ENCODE measurements at regions of chr1 and their contacts with region 1.

Region 1: GRCh38 chr1:150925816-150926741 is at the start of gene SETDB1:
- DNase-seq: peak; percentile 97
- H3K4me3 Mint-ChIP-seq: peak within 1 kb of the TSS; percentile 96
- H3K27ac Mint-ChIP-seq: peak within 1 kb of the TSS; percentile 96
- H3K4me1 Mint-ChIP-seq: peaks cover 25% of the 10 kb centered on the region
- H3K27me3 Mint-ChIP-seq: no peaks in the 10 kb centered on the region
- total RNA-seq, gene SETDB1: 40.4 to 44.7 TPM

Region 2: GRCh38 chr1:150567717-150568593 is 358.1 kb before region 1 on chr1:
- CTCF ChIA-PET with region 1: interaction called, 3 read pairs
- intact Hi-C with region 1: loop called (anchors 1 kb)
- DNase-seq: peak; percentile 67
- H3K4me3 Mint-ChIP-seq: peak overlapping the region; percentile 71
- H3K27ac Mint-ChIP-seq: peak overlapping the region; percentile 99
- H3K4me1 Mint-ChIP-seq: peaks cover 94% of the 10 kb centered on the region
- H3K27me3 Mint-ChIP-seq: no peaks in the 10 kb centered on the region

Region 3: DNA sequence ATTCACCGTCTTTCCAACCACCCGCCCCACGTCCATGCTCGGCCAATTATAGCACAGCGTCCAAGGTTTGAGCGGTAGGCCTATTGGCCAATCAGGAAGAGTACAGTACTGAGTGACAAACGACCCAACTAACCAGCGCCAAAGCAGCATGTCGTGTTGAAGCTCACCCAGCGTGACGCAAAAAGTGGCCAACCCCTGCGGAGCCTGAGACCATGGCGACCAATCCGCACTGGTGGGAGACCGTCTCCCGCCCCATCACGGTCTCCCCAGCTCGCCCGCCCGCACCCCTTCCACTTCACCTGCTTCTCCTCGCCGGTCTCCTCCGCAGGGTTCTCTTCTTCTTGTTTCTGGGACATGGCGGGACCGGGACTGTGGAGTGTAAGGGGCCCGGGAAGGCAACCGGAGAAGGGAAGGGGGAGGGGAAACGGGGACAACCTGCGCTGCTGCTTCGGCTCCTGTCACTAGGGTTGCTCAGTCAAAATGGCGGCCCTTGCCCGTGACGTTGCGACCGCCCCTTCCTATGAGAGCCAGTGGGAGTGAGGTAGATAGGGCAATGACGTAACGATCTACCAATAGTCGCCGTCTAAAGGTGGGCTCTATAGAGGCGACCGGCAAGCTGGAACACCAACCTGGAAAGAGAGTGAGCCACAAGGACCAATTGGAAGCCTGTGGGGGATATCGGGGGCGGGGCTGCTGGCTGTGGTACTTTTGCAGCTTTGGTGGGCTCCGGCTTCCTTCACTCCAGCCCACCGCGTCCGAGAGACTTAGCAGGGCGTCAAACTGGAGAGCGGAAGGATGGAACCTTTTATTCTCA is 296.8 kb before region 1 on chr1 and contains the start of gene ENSA:
- CTCF ChIA-PET with region 1: interaction called, 4 read pairs
- intact Hi-C with region 1: loop called (anchors 1 kb)
- DNase-seq: peak; percentile 98
- H3K4me3 Mint-ChIP-seq: no peak within 1 kb of the TSS
- H3K27ac Mint-ChIP-seq: peak within 1 kb of the TSS; percentile 54
- H3K4me1 Mint-ChIP-seq: peaks cover 42% of the 10 kb centered on the region
- H3K27me3 Mint-ChIP-seq: no peaks in the 10 kb centered on the region
- total RNA-seq, gene ENSA: 187 to 193 TPM

Region 4: DNA sequence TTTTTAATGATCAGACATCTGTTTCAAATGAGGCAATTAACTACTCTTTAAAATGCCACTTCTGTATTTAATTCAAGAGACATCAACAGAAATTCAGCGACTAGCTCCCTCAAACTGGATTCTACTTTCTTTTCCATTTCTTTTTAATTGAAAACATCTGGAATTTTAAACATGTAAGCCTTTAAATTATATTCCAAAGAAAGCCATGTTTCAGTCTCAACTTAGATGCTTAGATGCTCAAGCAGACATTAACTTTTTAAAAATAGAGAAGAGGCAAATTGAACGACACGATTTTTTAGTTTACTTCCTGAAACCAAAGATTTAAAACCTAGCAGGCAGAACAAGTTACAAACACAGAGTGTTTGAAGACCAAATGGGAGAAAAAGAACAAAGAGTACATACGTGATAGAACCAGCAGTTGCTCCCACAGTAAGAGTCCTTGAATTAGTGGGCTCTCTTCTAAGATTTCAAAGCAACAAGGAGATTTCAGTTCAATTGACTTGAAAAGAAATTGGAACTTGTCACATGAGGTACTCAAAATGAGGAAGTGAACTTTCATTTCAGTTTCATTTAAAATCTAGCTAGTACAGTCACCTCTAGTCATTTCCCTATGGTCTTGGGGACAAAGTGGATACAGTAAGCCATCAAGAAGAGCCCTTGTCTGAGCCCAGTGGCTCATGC is 160.6 kb before region 1 on chr1 and contains the start of gene CTSS:
- CTCF ChIA-PET with region 1: interaction called, 4 read pairs
- intact Hi-C with region 1: loop called (anchors 1 kb)
- DNase-seq: no peak
- H3K4me3 Mint-ChIP-seq: peak within 1 kb of the TSS; percentile 90
- H3K27ac Mint-ChIP-seq: peak within 1 kb of the TSS; percentile 94
- H3K4me1 Mint-ChIP-seq: peaks cover 48% of the 10 kb centered on the region
- H3K27me3 Mint-ChIP-seq: no peaks in the 10 kb centered on the region
- total RNA-seq, gene CTSS: 37.0 to 37.7 TPM

Region 5: DNA sequence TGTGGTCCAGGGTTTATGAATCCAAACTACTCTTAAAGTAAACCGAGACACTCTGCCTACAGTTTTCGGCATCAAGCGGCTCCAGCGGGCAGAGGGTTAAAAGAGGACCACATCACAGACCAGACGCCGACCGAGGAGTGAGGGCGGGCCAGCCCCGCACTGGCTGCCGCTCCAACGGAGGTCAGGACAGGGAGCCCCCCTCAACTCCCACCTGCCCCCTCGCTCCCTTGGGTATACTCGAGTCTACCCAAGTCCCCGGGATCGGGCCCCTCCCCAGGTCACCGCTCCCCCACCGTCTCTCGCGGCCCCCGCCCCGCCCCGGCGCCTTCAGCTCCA is 50.0 kb before region 1 on chr1:
- CTCF ChIA-PET with region 1: interaction called, 7 read pairs
- intact Hi-C with region 1: loop called (anchors 1 kb)
- DNase-seq: peak; percentile 58
- H3K4me3 Mint-ChIP-seq: peak overlapping the region; percentile 83
- H3K27ac Mint-ChIP-seq: peak overlapping the region; percentile 83
- H3K4me1 Mint-ChIP-seq: peaks cover 18% of the 10 kb centered on the region
- H3K27me3 Mint-ChIP-seq: no peaks in the 10 kb centered on the region

Region 6: DNA sequence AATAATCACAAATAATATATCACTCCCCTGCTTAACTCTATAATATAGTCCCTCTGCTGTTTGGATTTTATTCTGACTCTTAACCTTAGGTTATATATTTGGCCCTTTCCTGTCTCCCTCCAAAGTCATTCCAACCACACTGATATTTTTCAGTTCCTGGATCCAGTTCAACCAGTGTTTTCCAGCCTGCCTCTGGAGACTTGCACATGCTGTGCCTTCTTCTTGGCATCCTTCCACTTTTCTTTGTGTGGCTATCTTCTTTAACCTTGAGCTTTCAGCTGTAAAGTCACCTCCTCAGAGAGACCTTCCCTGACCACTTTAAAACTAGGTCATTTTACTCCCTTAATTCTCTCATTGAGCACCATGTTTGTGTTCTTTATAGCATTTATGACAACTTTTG is 29.2 kb after region 1 on chr1:
- CTCF ChIA-PET with region 1: no interaction called
- intact Hi-C with region 1: no loop called
- DNase-seq: no peak
- H3K4me3 Mint-ChIP-seq: no peak overlapping the region
- H3K27ac Mint-ChIP-seq: no peak overlapping the region
- H3K4me1 Mint-ChIP-seq: peaks cover 3% of the 10 kb centered on the region
- H3K27me3 Mint-ChIP-seq: no peaks in the 10 kb centered on the region

Region 7: DNA sequence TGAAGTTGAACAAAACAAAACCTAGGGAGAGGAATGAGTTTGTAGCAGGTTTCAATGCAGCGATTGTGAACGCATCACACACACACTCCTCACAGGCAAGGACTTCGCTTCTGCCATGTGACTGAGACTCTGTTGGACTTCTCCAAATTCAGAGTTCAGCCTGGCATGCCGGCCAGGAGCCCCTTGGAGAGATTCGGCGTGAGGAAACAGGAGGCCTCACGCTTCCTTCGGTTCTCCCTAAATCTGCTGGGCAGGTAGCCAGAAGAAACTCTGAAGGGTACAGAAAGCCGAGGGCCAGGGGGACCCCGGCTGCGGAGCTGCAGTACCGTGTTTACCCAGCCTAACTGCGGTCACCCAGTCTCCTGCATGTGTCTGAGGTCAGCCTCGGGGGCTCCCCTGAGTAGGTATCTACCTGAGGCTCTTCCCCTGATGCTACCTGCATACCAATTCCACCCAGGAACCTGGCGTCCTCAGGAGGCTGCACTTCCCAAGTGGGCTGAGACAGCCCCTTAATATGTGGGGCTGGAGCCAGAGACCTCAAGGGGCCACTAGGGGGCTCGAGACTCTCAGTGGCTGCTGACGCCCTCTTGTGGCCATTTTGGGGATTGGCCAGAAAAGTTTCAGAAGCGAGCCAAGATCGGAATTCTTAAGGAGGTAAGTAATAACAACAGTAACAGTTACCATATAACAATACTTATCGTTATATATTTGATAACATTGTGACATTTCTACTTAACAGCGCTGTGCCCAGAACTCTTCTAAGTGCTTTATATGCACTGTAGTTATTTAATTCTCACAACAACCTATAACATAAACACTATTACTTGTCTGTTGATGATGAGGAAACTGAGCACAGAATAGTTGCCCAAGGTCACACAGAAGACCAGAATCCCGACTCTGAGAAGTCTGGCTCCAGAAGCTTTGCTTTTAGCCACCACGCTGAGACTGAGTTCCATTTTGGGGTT is 53.3 kb after region 1 on chr1:
- CTCF ChIA-PET with region 1: interaction called, 3 read pairs
- intact Hi-C with region 1: loop called (anchors 1 kb)
- DNase-seq: peak; percentile 94
- H3K4me3 Mint-ChIP-seq: peak overlapping the region; percentile 43
- H3K27ac Mint-ChIP-seq: peak overlapping the region; percentile 53
- H3K4me1 Mint-ChIP-seq: peaks cover 39% of the 10 kb centered on the region
- H3K27me3 Mint-ChIP-seq: no peaks in the 10 kb centered on the region

Region 8: GRCh38 chr1:151059078-151059907 is 133.2 kb after region 1 on chr1 and contains the start of gene CDC42SE1:
- CTCF ChIA-PET with region 1: no interaction called
- intact Hi-C with region 1: loop called (anchors 5 kb)
- DNase-seq: peak; percentile 86
- H3K4me3 Mint-ChIP-seq: peak within 1 kb of the TSS; percentile 86
- H3K27ac Mint-ChIP-seq: peak within 1 kb of the TSS; percentile 98
- H3K4me1 Mint-ChIP-seq: peaks cover 53% of the 10 kb centered on the region
- H3K27me3 Mint-ChIP-seq: no peaks in the 10 kb centered on the region
- total RNA-seq, gene CDC42SE1: 98.1 to 99.0 TPM

Measured in activated naive CD4-positive, alpha-beta T cell treated with anti-CD3 and anti-CD28 coated beads for 36 hours (primary cell).